Adrenal gland (tissue), 19 donors: ENCODE measurements at regions of chr5 and their contacts with region 1.

Region 1: DNA sequence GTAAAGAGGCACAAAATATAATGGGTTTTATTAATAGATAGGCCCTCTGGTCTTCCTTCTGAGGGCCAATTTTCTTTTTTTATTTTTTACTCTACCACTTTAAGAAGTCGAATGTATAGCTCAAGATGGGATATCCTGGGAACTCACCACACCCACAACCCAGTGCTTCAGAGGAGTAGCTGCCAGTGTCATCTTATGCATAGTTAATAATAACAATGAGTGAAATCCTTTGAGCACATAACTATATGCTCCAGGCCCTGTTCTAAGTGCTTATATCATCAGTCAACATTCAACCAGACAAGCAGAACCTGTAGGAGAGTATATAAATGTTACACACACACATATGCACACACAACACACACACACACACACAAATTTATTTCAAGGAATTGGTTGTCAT is 150.3 kb upstream of the ACTBL2 start:
- DNase-seq: no peak
- H3K4me3 ChIP-seq: no peak overlapping the region
- H3K27ac ChIP-seq: no peak overlapping the region
- H3K4me1 ChIP-seq: no peaks in the 10 kb centered on the region
- H3K27me3 ChIP-seq: no peaks in the 10 kb centered on the region
- CTCF ChIP-seq: no peak
- POLR2A ChIP-seq: no peak

Region 2: DNA sequence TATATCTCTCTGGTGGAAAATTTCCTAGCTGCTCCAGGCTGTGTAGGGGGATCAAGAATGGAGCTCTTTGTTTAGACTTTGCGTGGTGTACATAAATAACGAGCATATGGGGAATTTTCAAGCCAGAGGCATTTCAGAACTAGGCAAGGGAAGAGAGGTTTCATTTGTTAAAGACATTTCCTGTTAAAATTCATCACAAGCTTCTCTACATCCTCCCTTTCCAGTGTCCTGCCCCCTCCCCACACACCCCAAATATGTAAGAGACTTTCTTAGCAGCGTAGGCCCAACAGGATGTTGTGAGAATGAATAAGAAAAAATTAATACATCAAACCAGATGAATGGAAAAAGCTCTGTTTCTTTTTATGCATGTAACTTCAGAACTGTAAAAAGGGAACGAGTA is 308.8 kb before region 1 on chr5:
- intact Hi-C with region 1: loop called in 1 of 2 experiments (anchors 5 kb)
- DNase-seq: no peak
- H3K4me3 ChIP-seq: no peak overlapping the region
- H3K27ac ChIP-seq: no peak overlapping the region
- H3K4me1 ChIP-seq: no peaks in the 10 kb centered on the region
- H3K27me3 ChIP-seq: no peaks in the 10 kb centered on the region
- CTCF ChIP-seq: no peak
- POLR2A ChIP-seq: no peak